ENCODE measurements at regions of chr5 and their contacts with region 1.

Region 1: GRCh38 chr5:24472518-24472917 is 172.3 kb downstream of the CDH10 start:
- DNase-seq: no peak
- H3K4me3 ChIP-seq: no peak overlapping the region
- H3K27ac ChIP-seq: no peak overlapping the region
- H3K4me1 ChIP-seq: no peaks in the 10 kb centered on the region
- H3K27me3 ChIP-seq: no peaks in the 10 kb centered on the region
- CTCF ChIP-seq: no peak
- EP300 ChIP-seq: no peak
- POLR2A ChIP-seq: no peak

Region 2: GRCh38 chr5:24363789-24364481 is 108.6 kb before region 1 on chr5:
- in situ Hi-C with region 1: no loop called
- intact Hi-C with region 1: no loop called
- DNase-seq: no peak
- H3K4me3 ChIP-seq: no peak overlapping the region
- H3K27ac ChIP-seq: no peak overlapping the region
- H3K4me1 ChIP-seq: no peaks in the 10 kb centered on the region
- H3K27me3 ChIP-seq: no peaks in the 10 kb centered on the region
- CTCF ChIP-seq: no peak
- EP300 ChIP-seq: no peak
- POLR2A ChIP-seq: no peak

Region 3: GRCh38 chr5:24376616-24377015 is 95.9 kb before region 1 on chr5:
- in situ Hi-C with region 1: no loop called
- intact Hi-C with region 1: no loop called
- DNase-seq: no peak
- H3K4me3 ChIP-seq: no peak overlapping the region
- H3K27ac ChIP-seq: no peak overlapping the region
- H3K4me1 ChIP-seq: no peaks in the 10 kb centered on the region
- H3K27me3 ChIP-seq: no peaks in the 10 kb centered on the region
- CTCF ChIP-seq: no peak
- EP300 ChIP-seq: no peak
- POLR2A ChIP-seq: no peak

Region 4: GRCh38 chr5:25224316-25224982 is 751.9 kb after region 1 on chr5:
- in situ Hi-C with region 1: no loop called
- intact Hi-C with region 1: loop called (anchors 10 kb)
- DNase-seq: no peak
- H3K4me3 ChIP-seq: no peak overlapping the region
- H3K27ac ChIP-seq: no peak overlapping the region
- H3K4me1 ChIP-seq: no peaks in the 10 kb centered on the region
- H3K27me3 ChIP-seq: no peaks in the 10 kb centered on the region
- CTCF ChIP-seq: no peak
- EP300 ChIP-seq: no peak
- POLR2A ChIP-seq: no peak

Region 5: DNA sequence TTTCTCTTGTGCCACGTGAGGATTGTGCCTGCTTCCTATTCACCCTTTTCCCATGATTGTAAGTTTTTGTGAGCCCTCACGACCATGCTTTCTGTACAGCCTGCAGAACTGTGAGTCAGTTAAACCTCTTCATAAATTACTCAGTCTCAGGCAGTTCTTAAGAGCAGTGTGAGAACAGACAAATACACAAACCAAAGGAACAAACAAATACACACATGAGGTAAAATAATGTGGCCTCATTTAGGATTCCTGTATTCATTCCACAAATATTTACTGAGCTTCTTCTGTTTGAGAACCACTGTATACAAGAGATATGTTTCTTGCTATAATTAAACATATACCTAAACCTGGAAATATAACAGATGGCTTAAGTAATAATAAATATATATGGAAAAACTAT is 1805.6 kb after region 1 on chr5:
- in situ Hi-C with region 1: no loop called
- intact Hi-C with region 1: no loop called
- DNase-seq: no peak
- H3K4me3 ChIP-seq: no peak overlapping the region
- H3K27ac ChIP-seq: no peak overlapping the region
- H3K4me1 ChIP-seq: no peaks in the 10 kb centered on the region
- H3K27me3 ChIP-seq: no peaks in the 10 kb centered on the region
- CTCF ChIP-seq: no peak
- EP300 ChIP-seq: no peak
- POLR2A ChIP-seq: no peak

Measured in transverse colon (tissue), 4 donors.